ENCODE measurements at regions of chr22 and their contacts with region 1.

Region 1: GRCh38 chr22:40950962-40951794 is at the start of gene RBX1:
- DNase-seq: peak; percentile 92 to 99
- H3K4me3 ChIP-seq: peak within 1 kb of the TSS; percentile 78 to 83
- H3K27ac ChIP-seq: peak within 1 kb of the TSS; percentile 95
- H3K4me1 ChIP-seq: peaks cover 3 to 18% of the 10 kb centered on the region in 2 donors
- H3K27me3 ChIP-seq: no peaks in the 10 kb centered on the region
- CTCF ChIP-seq: no peak
- total RNA-seq, gene RBX1: 50.6 TPM

Region 2: DNA sequence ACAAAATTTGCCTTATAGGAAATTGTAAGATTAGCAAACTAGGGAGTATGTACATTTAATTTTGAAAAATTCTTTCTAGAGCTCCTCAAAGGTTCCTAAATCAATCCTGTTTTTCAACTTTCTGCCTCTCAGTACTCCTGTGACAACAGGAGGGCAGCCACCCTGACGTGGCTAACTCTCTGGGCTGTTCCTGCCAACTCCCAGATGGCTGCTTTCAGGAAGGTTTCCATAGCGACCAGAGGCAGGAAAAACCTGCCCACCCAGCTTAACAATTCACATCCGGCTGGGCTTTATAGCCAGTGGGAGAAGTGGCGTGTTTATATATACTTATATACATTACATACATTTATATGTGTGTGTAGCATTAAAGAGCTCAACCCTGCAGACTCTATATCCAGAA is 554.3 kb before region 1 on chr22:
- intact Hi-C with region 1: no loop called
- DNase-seq: peak in 1 of 2 donors; percentile 59
- H3K4me3 ChIP-seq: no peak overlapping the region
- H3K27ac ChIP-seq: no peak overlapping the region
- H3K4me1 ChIP-seq: no peaks in the 10 kb centered on the region
- H3K27me3 ChIP-seq: no peaks in the 10 kb centered on the region
- CTCF ChIP-seq: no peak

Region 3: DNA sequence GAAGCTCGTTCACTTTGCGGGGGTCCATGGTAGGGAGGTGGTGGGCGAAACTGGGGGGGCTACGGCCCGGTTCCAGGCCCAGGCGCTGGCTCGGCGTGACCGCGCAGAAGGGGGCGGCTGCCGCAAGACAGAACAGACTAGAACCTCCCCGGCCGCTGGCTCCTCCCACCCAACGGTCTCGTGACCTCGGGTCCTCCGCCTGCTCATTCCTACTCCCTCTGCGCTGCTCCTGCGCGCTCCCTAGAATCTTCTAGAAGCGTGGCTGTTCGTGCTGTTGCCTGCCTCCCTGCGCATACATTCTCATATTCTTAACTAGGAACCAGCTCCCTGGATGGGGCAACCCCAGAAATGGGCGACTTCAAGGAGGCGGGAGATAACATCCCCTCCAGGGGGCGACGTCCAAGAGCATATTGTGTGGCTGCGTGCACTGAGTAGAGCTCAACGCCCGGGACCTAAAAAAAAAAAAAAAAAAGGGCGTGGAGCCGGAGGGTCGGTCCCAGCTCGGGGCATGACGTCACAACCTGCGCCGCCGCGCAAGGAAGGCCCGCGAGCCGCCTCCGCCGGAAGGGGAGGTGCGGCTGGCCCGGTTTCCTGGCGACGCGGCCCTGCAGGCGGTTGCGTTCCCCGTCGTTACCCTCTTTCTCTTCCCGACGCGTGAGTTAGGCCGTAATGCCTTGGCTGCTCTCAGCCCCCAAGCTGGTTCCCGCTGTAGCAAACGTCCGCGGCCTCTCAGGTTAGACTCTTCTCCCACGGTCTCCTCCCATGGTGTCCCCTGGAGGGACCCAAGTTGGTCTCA is 94.5 kb before region 1 on chr22 and contains the starts of genes ST13 and XPNPEP3:
- intact Hi-C with region 1: loop called (anchors 5 kb)
- DNase-seq: peak; percentile 91 to 98
- H3K4me3 ChIP-seq: peak within 1 kb of the TSS; percentile 73 to 99
- H3K27ac ChIP-seq: peak within 1 kb of the TSS; percentile 87 to 96
- H3K4me1 ChIP-seq: peaks cover 10 to 29% of the 10 kb centered on the region in 2 donors
- H3K27me3 ChIP-seq: no peaks in the 10 kb centered on the region
- CTCF ChIP-seq: no peak
- total RNA-seq, gene ST13: 46.0 TPM
- total RNA-seq, gene XPNPEP3: 1.1 TPM

Region 4: GRCh38 chr22:40990430-40990829 is 39.3 kb after region 1 on chr22:
- intact Hi-C with region 1: no loop called
- DNase-seq: no peak
- H3K4me3 ChIP-seq: no peak overlapping the region
- H3K27ac ChIP-seq: no peak overlapping the region
- H3K4me1 ChIP-seq: no peaks in the 10 kb centered on the region
- H3K27me3 ChIP-seq: no peaks in the 10 kb centered on the region
- CTCF ChIP-seq: no peak

Region 5: GRCh38 chr22:41022470-41023298 is 71.5 kb after region 1 on chr22:
- intact Hi-C with region 1: loop called (anchors 1 kb)
- DNase-seq: peak; percentile 59 to 94
- H3K4me3 ChIP-seq: peak overlapping the region; percentile 81 to 89
- H3K27ac ChIP-seq: peak overlapping the region; percentile 95 to 96
- H3K4me1 ChIP-seq: peaks cover 3% of the 10 kb centered on the region in 2 donors
- H3K27me3 ChIP-seq: no peaks in the 10 kb centered on the region
- CTCF ChIP-seq: no peak

Region 6: GRCh38 chr22:41197038-41197972 is 246.1 kb after region 1 on chr22:
- intact Hi-C with region 1: loop called (anchors 2 kb)
- DNase-seq: peak in 1 of 2 donors; percentile 91
- H3K4me3 ChIP-seq: peak overlapping the region; percentile 61 to 78
- H3K27ac ChIP-seq: no peak overlapping the region
- H3K4me1 ChIP-seq: peaks cover 0 to 2% of the 10 kb centered on the region in 2 donors
- H3K27me3 ChIP-seq: no peaks in the 10 kb centered on the region
- CTCF ChIP-seq: peak in 2 of 3 experiments; percentile 3 to 13

Region 7: GRCh38 chr22:41285820-41286638 is 334.9 kb after region 1 on chr22 and contains the start of gene RANGAP1:
- intact Hi-C with region 1: loop called (anchors 2 kb)
- DNase-seq: peak; percentile 93 to 99
- H3K4me3 ChIP-seq: peak within 1 kb of the TSS; percentile 69 to 99
- H3K27ac ChIP-seq: peak within 1 kb of the TSS; percentile 77 to 78
- H3K4me1 ChIP-seq: peaks cover 3 to 27% of the 10 kb centered on the region in 2 donors
- H3K27me3 ChIP-seq: no peaks in the 10 kb centered on the region
- CTCF ChIP-seq: peak in 2 of 3 experiments; percentile 10
- total RNA-seq, gene RANGAP1: 49.8 TPM

Region 8: GRCh38 chr22:41468381-41469217 is 517.4 kb after region 1 on chr22 and contains the starts of genes ACO2 and PHF5A:
- intact Hi-C with region 1: loop called (anchors 5 kb)
- DNase-seq: peak; percentile 87 to 98
- H3K4me3 ChIP-seq: peak within 1 kb of the TSS; percentile 94 to 97
- H3K27ac ChIP-seq: peak within 1 kb of the TSS; percentile 93 to 96
- H3K4me1 ChIP-seq: peaks cover 3 to 17% of the 10 kb centered on the region in 2 donors
- H3K27me3 ChIP-seq: no peaks in the 10 kb centered on the region
- CTCF ChIP-seq: no peak
- total RNA-seq, gene ACO2: 81.1 TPM
- total RNA-seq, gene PHF5A: 4.8 TPM